ENCODE measurements at regions of chr14 and their contacts with region 1.

Region 1: GRCh38 chr14:75278422-75279161 is at the start of gene FOS:
- DNase-seq: peak; percentile 94 to 97
- ATAC-seq: peak; percentile 62 to 84 (median 71)
- H3K4me3 ChIP-seq: peak within 1 kb of the TSS; percentile 97
- H3K4me3 Mint-ChIP-seq: peak within 1 kb of the TSS; percentile 93
- H3K27ac ChIP-seq: peak within 1 kb of the TSS; percentile 84
- H3K27ac Mint-ChIP-seq: peak within 1 kb of the TSS; percentile 93 to 95
- H3K4me1 ChIP-seq: peaks cover 65% of the 10 kb centered on the region
- H3K4me1 Mint-ChIP-seq: peaks cover 63 to 79% of the 10 kb centered on the region in 2 donors
- H3K27me3 ChIP-seq: peaks cover 21% of the 10 kb centered on the region
- H3K27me3 Mint-ChIP-seq: peaks cover 20 to 26% of the 10 kb centered on the region in 2 donors
- CTCF ChIP-seq: no peak
- total RNA-seq, gene FOS: 2,527 to 3,257 (median 3,104) TPM

Region 2: DNA sequence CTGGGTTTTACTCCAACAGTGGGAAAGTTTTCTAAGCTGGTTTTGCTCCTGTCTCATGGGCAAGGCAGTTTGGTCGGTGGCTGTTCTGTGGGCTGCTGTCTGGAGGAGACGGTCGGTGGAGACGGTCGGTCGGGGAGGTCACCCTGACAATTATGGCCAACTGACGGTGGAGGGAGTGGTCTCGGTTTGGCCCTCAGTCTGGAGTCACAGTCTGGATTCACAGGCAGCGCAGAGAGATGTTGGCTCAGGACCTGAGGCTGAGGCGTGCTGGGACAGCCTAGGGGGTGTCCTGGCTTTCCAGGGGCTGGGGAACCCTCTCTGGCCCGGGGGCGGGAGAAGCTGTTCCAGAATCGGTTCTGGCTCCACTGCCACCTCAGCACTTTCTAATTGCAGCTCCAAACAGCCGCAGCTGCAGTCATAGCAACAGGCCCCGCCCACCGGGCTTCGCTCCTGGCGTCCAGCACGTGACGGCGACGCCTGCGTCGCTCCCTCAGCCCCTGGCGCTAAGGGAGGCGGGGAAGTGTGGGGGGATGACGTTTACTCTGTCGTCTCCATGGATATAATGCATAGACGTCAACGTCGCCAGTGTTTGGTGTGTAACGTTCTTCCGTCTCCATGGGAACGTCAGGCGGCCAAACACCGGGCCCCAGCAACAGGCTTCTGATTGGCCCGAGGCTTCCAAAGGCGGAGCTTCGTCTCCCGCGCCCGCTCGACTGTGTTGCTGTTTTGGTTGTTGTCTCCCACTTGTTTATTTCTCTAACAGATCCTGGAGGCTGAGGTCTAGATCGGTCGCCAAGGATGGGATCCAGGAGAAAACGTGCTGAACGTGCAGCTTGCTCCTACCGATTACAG is 19.8 kb before region 1 on chr14:
- intact Hi-C with region 1: loop called (anchors 1 kb)
- DNase-seq: peak; percentile 100
- ATAC-seq: peak; percentile 85 to 97 (median 90)
- H3K4me3 ChIP-seq: peak overlapping the region; percentile 46
- H3K4me3 Mint-ChIP-seq: peak overlapping the region; percentile 83
- H3K27ac ChIP-seq: peak overlapping the region; percentile 93
- H3K27ac Mint-ChIP-seq: peak overlapping the region; percentile 99
- H3K4me1 ChIP-seq: peaks cover 11% of the 10 kb centered on the region
- H3K4me1 Mint-ChIP-seq: peaks cover 23 to 34% of the 10 kb centered on the region in 2 donors
- H3K27me3 ChIP-seq: no peaks in the 10 kb centered on the region
- H3K27me3 Mint-ChIP-seq: no peaks in the 10 kb centered on the region
- CTCF ChIP-seq: no peak

Region 3: DNA sequence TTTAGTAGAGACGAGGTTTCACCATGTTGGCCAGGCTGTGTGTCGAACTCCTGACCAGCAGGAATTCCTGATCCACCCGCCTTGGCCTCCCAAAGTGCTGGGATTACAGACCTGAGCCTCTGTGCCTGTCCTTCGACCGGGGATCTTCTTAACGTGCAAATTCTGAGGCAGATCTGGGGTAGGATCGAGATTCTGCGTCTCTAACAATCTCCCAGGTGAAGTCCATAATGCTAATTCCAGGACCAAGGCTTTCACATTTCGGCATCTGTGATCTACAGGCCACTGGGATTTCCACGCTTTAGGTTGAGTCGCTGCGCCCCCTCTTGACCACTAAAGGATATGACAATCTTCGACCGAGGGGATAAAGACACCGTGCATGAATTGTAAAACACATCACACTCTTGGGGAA is 24.8 kb after region 1 on chr14:
- intact Hi-C with region 1: no loop called
- DNase-seq: peak; percentile 63 to 89
- ATAC-seq: peak; percentile 88 to 94 (median 90)
- H3K4me3 ChIP-seq: no peak overlapping the region
- H3K4me3 Mint-ChIP-seq: no peak overlapping the region
- H3K27ac ChIP-seq: no peak overlapping the region
- H3K27ac Mint-ChIP-seq: no peak overlapping the region
- H3K4me1 ChIP-seq: peaks cover 14% of the 10 kb centered on the region
- H3K4me1 Mint-ChIP-seq: peaks cover 4 to 10% of the 10 kb centered on the region in 2 donors
- H3K27me3 ChIP-seq: no peaks in the 10 kb centered on the region
- H3K27me3 Mint-ChIP-seq: peaks cover 0 to 3% of the 10 kb centered on the region in 2 donors
- CTCF ChIP-seq: peak; percentile 80

Measured in natural killer cell (primary cell).